PC-3 (cell line): ENCODE measurements at regions of chr13 and their contacts with region 1.

Region 1: DNA sequence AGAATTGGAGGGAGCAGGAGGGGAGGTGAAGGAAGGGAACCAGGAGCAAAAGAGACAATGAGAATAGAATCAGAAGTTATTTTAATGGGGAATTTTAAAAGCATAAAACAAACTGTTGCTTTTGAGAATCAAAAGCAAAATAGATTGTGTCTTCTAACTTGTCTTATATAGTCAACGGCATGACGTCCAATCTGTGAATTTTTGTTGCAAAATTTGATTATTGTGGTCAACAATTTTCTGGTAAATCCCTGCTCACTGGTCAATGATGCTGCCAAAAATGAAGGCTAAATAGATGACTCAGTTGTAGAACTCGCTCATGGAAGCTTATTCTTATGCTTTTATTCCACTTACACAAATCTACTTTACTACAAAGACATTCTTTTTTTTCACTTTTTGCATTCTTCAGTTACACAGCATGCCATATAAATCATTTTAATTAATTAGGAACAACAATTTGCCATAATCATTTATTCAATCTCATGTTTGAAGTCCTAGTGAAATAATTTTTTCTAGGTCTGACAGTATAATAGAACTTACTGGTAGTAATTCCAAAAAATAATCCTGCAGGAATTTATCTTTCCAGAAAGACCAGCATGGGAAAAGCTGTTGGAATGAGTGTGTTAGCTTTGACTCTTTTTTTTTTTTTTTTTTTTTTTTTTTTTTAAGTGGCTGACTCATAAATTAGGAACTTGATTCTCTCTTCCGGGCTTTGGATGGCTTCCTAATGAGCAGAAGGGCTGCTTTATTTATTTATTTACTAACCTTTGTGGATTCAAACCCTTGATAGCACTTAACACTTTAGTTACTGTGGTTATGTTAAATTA is 256.9 kb downstream of the SPRY2 start:
- DNase-seq: peak; percentile 64
- ATAC-seq: no peak
- H3K4me3 ChIP-seq: no peak overlapping the region
- H3K27ac ChIP-seq: peak overlapping the region; percentile 98
- H3K4me1 ChIP-seq: peaks cover 59% of the 10 kb centered on the region
- H3K27me3 ChIP-seq: no peaks in the 10 kb centered on the region
- CTCF ChIP-seq: no peak

Region 2: GRCh38 chr13:79988573-79988972 is 95.5 kb before region 1 on chr13:
- CTCF ChIA-PET with region 1: no interaction called
- POLR2A ChIA-PET with region 1: no interaction called
- intact Hi-C with region 1: loop called (anchors 1 kb)
- DNase-seq: peak; percentile 69
- ATAC-seq: peak; percentile 56
- H3K4me3 ChIP-seq: peak overlapping the region; percentile 42; the same call in 1 of the 2 replicates
- H3K27ac ChIP-seq: peak overlapping the region; percentile 100
- H3K4me1 ChIP-seq: peaks cover 43% of the 10 kb centered on the region
- H3K27me3 ChIP-seq: no peaks in the 10 kb centered on the region
- CTCF ChIP-seq: no peak

Region 3: DNA sequence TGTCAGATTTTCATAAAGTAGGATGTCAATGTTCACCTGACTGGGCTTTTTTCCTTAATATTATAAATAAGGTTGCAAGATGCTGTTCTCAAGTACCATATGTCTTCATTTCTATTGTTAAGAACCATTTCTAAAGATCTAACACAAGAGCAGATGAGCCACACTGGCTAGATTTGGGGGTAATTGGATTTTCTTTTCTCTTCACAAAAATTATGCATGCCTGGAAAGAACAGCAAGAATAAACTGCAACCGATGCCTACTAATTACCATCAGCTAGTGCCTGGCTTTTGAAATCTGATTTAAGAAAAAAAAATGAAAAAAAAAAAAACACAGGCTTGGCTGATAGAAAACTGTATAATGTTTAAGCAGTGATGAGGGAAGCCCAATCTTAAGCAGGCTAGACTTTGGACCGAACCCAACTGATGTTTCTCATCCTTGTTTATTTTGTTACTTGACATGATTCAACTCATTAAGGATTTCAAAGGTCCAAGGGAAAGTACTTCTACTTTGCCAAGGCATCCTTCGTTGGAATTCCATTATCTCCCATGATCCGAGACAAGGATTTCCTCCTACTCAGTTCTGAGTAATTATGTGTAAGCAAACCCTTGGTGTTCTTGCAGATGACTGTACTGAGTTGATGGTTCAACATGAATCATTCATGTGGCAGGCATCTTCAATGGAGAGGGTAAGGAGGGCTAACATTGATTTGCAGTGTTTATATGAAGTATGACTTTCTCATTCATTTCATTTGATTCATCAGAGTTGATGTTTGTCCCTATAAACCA is 43.7 kb before region 1 on chr13:
- CTCF ChIA-PET with region 1: no interaction called
- POLR2A ChIA-PET with region 1: interaction called, 3 read pairs
- intact Hi-C with region 1: loop called (anchors 2 kb)
- DNase-seq: peak; percentile 95
- ATAC-seq: peak; percentile 87
- H3K4me3 ChIP-seq: no peak overlapping the region
- H3K27ac ChIP-seq: peak overlapping the region; percentile 91
- H3K4me1 ChIP-seq: peaks cover 50% of the 10 kb centered on the region
- H3K27me3 ChIP-seq: no peaks in the 10 kb centered on the region
- CTCF ChIP-seq: no peak

Region 4: DNA sequence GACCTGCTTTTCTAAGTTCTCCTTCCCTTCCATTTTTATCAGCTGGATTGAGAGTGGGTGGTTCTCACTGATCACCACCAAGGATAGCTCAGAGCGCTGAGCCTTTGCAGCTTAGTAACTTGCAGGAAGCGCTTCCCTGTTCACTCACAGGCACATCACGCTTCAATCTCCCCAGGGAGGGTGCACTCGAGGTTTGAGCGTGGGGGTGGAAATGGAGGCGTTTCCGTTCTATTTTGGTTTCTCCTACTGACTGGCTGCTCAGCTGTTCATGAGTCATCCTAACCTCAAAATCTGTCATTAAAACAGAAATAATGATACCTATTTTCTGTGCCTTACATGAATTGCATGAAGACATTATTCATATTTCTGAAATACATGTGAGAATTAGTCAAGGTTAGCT is 35.3 kb before region 1 on chr13:
- CTCF ChIA-PET with region 1: no interaction called
- POLR2A ChIA-PET with region 1: no interaction called
- intact Hi-C with region 1: loop called (anchors 2 kb)
- DNase-seq: peak; percentile 91
- ATAC-seq: peak; percentile 99
- H3K4me3 ChIP-seq: no peak overlapping the region
- H3K27ac ChIP-seq: peak overlapping the region; percentile 64
- H3K4me1 ChIP-seq: peaks cover 32% of the 10 kb centered on the region
- H3K27me3 ChIP-seq: no peaks in the 10 kb centered on the region
- CTCF ChIP-seq: no peak

Region 5: DNA sequence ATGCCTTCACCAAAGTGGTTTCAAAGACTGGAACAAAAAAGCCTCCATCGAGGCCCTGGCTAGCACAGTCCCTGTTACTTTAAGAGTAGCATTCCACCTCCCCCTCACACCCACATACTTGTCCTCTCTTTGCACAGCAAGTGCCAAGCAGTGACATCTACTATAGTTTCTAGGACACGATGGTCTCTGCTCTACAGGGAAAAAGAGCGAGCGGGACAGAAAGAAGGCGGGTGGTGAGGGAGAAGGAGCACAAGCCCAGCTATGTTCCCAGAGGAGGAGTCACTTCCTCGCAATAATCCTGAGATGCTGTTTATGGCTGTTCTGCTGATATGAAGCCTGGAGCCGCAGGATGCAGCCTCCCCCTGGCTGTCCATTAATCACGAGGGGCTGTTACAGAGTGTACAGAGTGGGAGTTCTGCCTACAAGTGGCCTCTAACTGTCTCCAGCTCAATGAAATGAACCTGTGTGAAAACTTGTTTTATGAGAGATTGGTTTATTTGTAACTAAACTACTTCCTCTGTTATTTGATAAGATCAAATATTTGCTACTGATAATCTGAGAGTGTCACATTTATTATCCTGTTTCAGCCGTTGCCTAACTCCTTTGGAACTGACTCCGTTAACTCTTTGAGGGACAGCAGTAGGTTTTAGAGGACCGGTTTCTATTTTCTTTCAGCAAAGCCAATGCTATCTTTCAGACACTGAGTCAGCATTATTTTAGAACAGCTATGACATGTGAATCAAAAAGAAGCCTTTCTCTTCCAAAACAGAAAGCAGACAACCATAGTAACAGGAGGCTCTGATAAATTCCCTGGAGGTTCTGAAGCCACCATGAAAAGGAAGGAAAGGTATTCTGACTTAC is 48.9 kb after region 1 on chr13:
- CTCF ChIA-PET with region 1: no interaction called
- POLR2A ChIA-PET with region 1: no interaction called
- intact Hi-C with region 1: loop called (anchors 5 kb)
- DNase-seq: peak; percentile 45
- ATAC-seq: peak; percentile 84
- H3K4me3 ChIP-seq: peak overlapping the region; percentile 62
- H3K27ac ChIP-seq: peak overlapping the region; percentile 45
- H3K4me1 ChIP-seq: peaks cover 27% of the 10 kb centered on the region
- H3K27me3 ChIP-seq: no peaks in the 10 kb centered on the region
- CTCF ChIP-seq: no peak